ENCODE measurements at regions of chr11 and their contacts with region 1.

Region 1: GRCh38 chr11:42772886-42773285 is 538.9 kb upstream of the API5 start:
- DNase-seq: no peak
- ATAC-seq: no peak

Region 2: GRCh38 chr11:43282607-43283440 is 509.9 kb after region 1 on chr11:
- intact Hi-C with region 1: loop called in 1 of 2 experiments (anchors 2 kb)
- DNase-seq: peak; percentile 34
- ATAC-seq: peak; percentile 36 to 38